Natural killer cell (primary cell): ENCODE measurements at regions of chr1 and their contacts with region 1.

Region 1: GRCh38 chr1:170017478-170017877 is 57.0 kb downstream of the KIFAP3 start:
- DNase-seq: no peak
- ATAC-seq: no peak
- H3K4me3 ChIP-seq: no peak overlapping the region
- H3K4me3 Mint-ChIP-seq: no peak overlapping the region
- H3K27ac ChIP-seq: no peak overlapping the region
- H3K27ac Mint-ChIP-seq: no peak overlapping the region
- H3K4me1 ChIP-seq: no peaks in the 10 kb centered on the region
- H3K4me1 Mint-ChIP-seq: peaks cover 0 to 7% of the 10 kb centered on the region in 2 donors
- H3K27me3 ChIP-seq: no peaks in the 10 kb centered on the region
- H3K27me3 Mint-ChIP-seq: no peaks in the 10 kb centered on the region
- CTCF ChIP-seq: no peak

Region 2: DNA sequence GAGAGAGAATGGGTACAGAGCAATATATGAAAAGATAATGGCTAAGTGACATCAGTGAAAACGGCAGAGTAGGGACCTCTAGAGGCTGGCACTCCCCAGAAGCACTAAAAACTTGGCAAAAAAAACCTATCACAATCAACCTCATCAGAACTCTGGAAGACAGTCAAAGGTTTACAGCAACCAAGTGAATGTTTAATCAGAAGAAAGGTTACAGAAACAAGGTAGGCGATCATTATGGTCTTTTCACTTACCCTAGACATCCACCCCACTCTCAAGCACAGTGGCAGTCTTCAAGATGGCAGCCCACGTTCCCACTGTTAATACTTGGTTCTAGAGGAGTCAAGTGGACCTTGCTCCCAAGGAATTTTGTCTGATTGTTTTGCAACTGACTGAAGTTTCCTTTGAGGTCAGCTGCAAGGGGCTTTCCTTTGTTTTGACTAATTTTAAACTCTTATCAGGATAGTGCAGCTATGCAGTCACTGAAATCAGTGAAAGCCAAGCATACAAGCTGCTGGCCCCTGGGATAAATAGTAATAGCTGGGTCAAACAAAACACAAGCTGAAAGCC is 49.9 kb after region 1 on chr1:
- intact Hi-C with region 1: loop called (anchors 5 kb)
- DNase-seq: no peak
- ATAC-seq: peak in 1 of 3 donors; percentile 29
- H3K4me3 ChIP-seq: no peak overlapping the region
- H3K4me3 Mint-ChIP-seq: peak overlapping the region; percentile 64
- H3K27ac ChIP-seq: no peak overlapping the region
- H3K27ac Mint-ChIP-seq: peak overlapping the region; percentile 81 to 88
- H3K4me1 ChIP-seq: peaks cover 3% of the 10 kb centered on the region
- H3K4me1 Mint-ChIP-seq: peaks cover 67 to 70% of the 10 kb centered on the region in 2 donors
- H3K27me3 ChIP-seq: no peaks in the 10 kb centered on the region
- H3K27me3 Mint-ChIP-seq: no peaks in the 10 kb centered on the region
- CTCF ChIP-seq: no peak

Region 3: DNA sequence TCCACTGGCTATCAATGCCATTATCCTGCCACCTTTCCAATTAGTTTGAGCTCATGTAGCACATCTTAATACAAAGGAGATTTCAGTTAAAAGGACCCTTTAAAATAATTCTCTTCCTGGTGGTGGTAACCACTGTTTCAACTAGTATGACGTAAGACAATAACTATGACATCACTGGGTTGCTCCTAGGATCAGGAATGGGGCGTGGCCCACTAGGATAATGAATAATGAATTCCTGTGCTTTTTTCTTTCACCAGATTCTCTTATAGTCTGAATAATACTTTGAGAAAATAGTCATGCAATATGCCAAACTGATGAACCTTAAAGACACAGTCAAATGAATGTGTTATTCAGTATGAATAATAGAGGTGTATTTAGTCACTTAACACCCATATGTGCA is 67.6 kb after region 1 on chr1:
- intact Hi-C with region 1: no loop called
- DNase-seq: no peak
- ATAC-seq: no peak
- H3K4me3 ChIP-seq: no peak overlapping the region
- H3K4me3 Mint-ChIP-seq: no peak overlapping the region
- H3K27ac ChIP-seq: no peak overlapping the region
- H3K27ac Mint-ChIP-seq: no peak overlapping the region
- H3K4me1 ChIP-seq: no peaks in the 10 kb centered on the region
- H3K4me1 Mint-ChIP-seq: no peaks in the 10 kb centered on the region
- H3K27me3 ChIP-seq: peaks cover 3% of the 10 kb centered on the region
- H3K27me3 Mint-ChIP-seq: peaks cover 21 to 48% of the 10 kb centered on the region in 2 donors
- CTCF ChIP-seq: no peak